Head of caudate nucleus (tissue), 42 donors: ENCODE measurements at regions of chr15 and their contacts with region 1.

Region 1: GRCh38 chr15:58933281-58934113 is at the start of gene SLTM:
- DNase-seq: peak; percentile 76 to 96 (median 92)

Region 2: GRCh38 chr15:58227706-58228543 is 705.6 kb before region 1 on chr15:
- intact Hi-C with region 1: loop called (anchors 5 kb)
- DNase-seq: peak; percentile 59 to 95 (median 84)

Region 3: GRCh38 chr15:58704155-58704865 is 229.2 kb before region 1 on chr15:
- intact Hi-C with region 1: no loop called
- DNase-seq: no peak

Region 4: GRCh38 chr15:58770857-58771620 is 162.5 kb before region 1 on chr15 and contains the start of gene MINDY2:
- intact Hi-C with region 1: loop called (anchors 2 kb)
- DNase-seq: peak; percentile 95 to 99 (median 98)